ENCODE measurements at regions of chrX and their contacts with region 1.

Region 1: GRCh38 chrX:133045986-133046385 is 50.9 kb downstream of the USP26 start:
- DNase-seq: no peak
- ATAC-seq: no peak
- H3K4me3 ChIP-seq: no peak overlapping the region
- H3K27ac ChIP-seq: no peak overlapping the region
- H3K4me1 ChIP-seq: no peaks in the 10 kb centered on the region
- H3K27me3 ChIP-seq: no peaks in the 10 kb centered on the region
- CTCF ChIP-seq: no peak
- EP300 ChIP-seq: no peak
- POLR2A ChIP-seq: no peak
- RAD21 ChIP-seq: no peak

Region 2: GRCh38 chrX:132999150-132999549 is 46.8 kb before region 1 on chrX:
- CTCF ChIA-PET with region 1: no interaction called
- POLR2A ChIA-PET with region 1: no interaction called
- RAD21 ChIA-PET with region 1: no interaction called
- SMC1A ChIA-PET with region 1: no interaction called
- in situ Hi-C with region 1: no loop called
- intact Hi-C with region 1: no loop called
- DNase-seq: no peak
- ATAC-seq: no peak
- H3K4me3 ChIP-seq: no peak overlapping the region
- H3K27ac ChIP-seq: no peak overlapping the region
- H3K4me1 ChIP-seq: no peaks in the 10 kb centered on the region
- H3K27me3 ChIP-seq: no peaks in the 10 kb centered on the region
- CTCF ChIP-seq: no peak
- EP300 ChIP-seq: no peak
- POLR2A ChIP-seq: no peak
- RAD21 ChIP-seq: no peak

Region 3: DNA sequence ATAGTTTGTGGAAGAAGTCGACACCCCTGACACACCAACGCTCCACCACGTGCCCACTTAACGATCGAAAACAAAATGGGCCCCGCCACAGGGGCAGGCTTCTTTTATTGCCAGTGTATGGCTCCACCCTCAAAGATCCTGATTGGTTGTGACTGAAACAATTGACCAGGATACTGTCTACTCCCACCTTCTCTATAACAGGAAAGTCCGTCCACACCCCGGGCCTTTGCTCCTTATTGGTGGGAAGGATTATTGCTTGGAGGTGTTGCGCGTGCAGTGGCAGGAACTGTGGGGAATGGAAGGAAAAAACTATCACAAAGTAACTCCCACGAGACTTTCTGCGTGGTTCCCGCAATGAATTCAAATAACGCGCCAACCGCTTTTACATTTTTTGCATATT is 51.0 kb after region 1 on chrX and contains the start of gene USP26:
- CTCF ChIA-PET with region 1: no interaction called
- POLR2A ChIA-PET with region 1: no interaction called
- RAD21 ChIA-PET with region 1: no interaction called
- SMC1A ChIA-PET with region 1: no interaction called
- in situ Hi-C with region 1: no loop called
- intact Hi-C with region 1: loop called (anchors 10 kb)
- DNase-seq: no peak
- ATAC-seq: no peak
- H3K4me3 ChIP-seq: no peak within 1 kb of the TSS
- H3K27ac ChIP-seq: no peak within 1 kb of the TSS
- H3K4me1 ChIP-seq: no peaks in the 10 kb centered on the region
- H3K27me3 ChIP-seq: no peaks in the 10 kb centered on the region
- CTCF ChIP-seq: no peak
- EP300 ChIP-seq: no peak
- POLR2A ChIP-seq: no peak
- RAD21 ChIP-seq: no peak
- polyA plus RNA-seq, gene USP26: not detected

Region 4: GRCh38 chrX:133151336-133151735 is 105.3 kb after region 1 on chrX:
- CTCF ChIA-PET with region 1: no interaction called
- POLR2A ChIA-PET with region 1: no interaction called
- RAD21 ChIA-PET with region 1: no interaction called
- SMC1A ChIA-PET with region 1: no interaction called
- in situ Hi-C with region 1: no loop called
- intact Hi-C with region 1: no loop called
- DNase-seq: no peak
- ATAC-seq: no peak
- H3K4me3 ChIP-seq: no peak overlapping the region
- H3K27ac ChIP-seq: no peak overlapping the region
- H3K4me1 ChIP-seq: no peaks in the 10 kb centered on the region
- H3K27me3 ChIP-seq: no peaks in the 10 kb centered on the region
- CTCF ChIP-seq: no peak
- EP300 ChIP-seq: no peak
- POLR2A ChIP-seq: no peak
- RAD21 ChIP-seq: no peak